ENCODE measurements at regions of chr2 and their contacts with region 1.

Region 1: DNA sequence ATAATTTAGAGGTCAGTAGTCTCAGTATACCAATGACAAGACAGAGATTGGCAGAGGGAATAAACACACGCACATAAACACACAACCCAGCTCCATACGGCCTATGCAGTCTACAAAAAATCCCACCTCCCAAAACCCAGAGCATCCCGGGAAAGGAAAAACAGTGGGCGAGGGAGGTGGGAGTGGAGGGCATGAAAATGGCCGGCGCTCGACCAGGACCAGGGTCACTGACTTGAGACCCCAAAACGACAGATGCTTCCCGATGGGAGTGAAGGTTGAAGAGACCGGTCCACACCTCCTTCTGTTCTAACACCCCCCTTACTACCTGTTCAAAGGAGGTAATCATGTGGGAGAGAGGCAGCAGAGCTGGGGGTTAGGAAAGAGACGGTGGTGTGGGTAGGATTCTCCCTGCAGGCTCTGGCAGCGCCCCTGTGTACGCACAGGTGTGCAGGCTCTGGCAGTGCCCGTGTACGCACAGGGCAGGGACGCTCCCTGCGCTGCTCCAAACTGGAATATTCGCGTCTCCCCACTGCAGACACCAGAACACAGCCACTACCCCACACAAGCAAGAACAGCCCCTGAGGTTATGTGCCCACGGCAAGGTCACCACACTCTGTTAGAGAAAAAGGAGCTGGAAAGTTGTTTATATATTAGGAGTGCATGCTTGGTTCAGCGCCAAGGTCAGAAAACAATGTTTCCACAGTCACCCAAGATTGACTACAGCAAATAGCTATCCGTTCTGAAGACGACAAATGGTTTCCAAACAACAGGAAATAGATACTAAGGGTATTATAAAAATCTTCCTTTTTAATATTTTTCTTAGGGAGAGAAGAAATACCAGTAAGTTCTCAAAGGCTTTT is 67.9 kb downstream of the EIPR1 start:
- DNase-seq: no peak
- ATAC-seq: no peak
- H3K4me3 ChIP-seq: no peak overlapping the region
- H3K4me3 Mint-ChIP-seq: no peak overlapping the region
- H3K27ac ChIP-seq: no peak overlapping the region
- H3K27ac Mint-ChIP-seq: no peak overlapping the region
- H3K4me1 ChIP-seq: peaks cover 19% of the 10 kb centered on the region
- H3K4me1 Mint-ChIP-seq: peaks cover 28% of the 10 kb centered on the region
- H3K27me3 ChIP-seq: no peaks in the 10 kb centered on the region
- H3K27me3 Mint-ChIP-seq: no peaks in the 10 kb centered on the region
- CTCF ChIP-seq: no peak

Region 2: GRCh38 chr2:3091696-3092095 is 218.0 kb before region 1 on chr2:
- CTCF ChIA-PET with region 1: no interaction called
- POLR2A ChIA-PET with region 1: no interaction called
- intact Hi-C with region 1: no loop called
- DNase-seq: no peak
- ATAC-seq: no peak
- H3K4me3 ChIP-seq: no peak overlapping the region
- H3K4me3 Mint-ChIP-seq: no peak overlapping the region
- H3K27ac ChIP-seq: no peak overlapping the region
- H3K27ac Mint-ChIP-seq: no peak overlapping the region
- H3K4me1 ChIP-seq: no peaks in the 10 kb centered on the region
- H3K4me1 Mint-ChIP-seq: peaks cover 11% of the 10 kb centered on the region
- H3K27me3 ChIP-seq: no peaks in the 10 kb centered on the region
- H3K27me3 Mint-ChIP-seq: peaks cover 25% of the 10 kb centered on the region
- CTCF ChIP-seq: no peak

Region 3: GRCh38 chr2:3198119-3198518 is 111.6 kb before region 1 on chr2:
- CTCF ChIA-PET with region 1: no interaction called
- POLR2A ChIA-PET with region 1: no interaction called
- intact Hi-C with region 1: loop called in 1 of 2 experiments (anchors 5 kb)
- DNase-seq: peak in 4 of 14 experiments; percentile 13 to 59 (median 37)
- ATAC-seq: no peak
- H3K4me3 ChIP-seq: peak overlapping the region; percentile 10
- H3K4me3 Mint-ChIP-seq: no peak overlapping the region
- H3K27ac ChIP-seq: no peak overlapping the region
- H3K27ac Mint-ChIP-seq: no peak overlapping the region
- H3K4me1 ChIP-seq: no peaks in the 10 kb centered on the region
- H3K4me1 Mint-ChIP-seq: peaks cover 4% of the 10 kb centered on the region
- H3K27me3 ChIP-seq: no peaks in the 10 kb centered on the region
- H3K27me3 Mint-ChIP-seq: no peaks in the 10 kb centered on the region
- CTCF ChIP-seq: no peak

Region 4: DNA sequence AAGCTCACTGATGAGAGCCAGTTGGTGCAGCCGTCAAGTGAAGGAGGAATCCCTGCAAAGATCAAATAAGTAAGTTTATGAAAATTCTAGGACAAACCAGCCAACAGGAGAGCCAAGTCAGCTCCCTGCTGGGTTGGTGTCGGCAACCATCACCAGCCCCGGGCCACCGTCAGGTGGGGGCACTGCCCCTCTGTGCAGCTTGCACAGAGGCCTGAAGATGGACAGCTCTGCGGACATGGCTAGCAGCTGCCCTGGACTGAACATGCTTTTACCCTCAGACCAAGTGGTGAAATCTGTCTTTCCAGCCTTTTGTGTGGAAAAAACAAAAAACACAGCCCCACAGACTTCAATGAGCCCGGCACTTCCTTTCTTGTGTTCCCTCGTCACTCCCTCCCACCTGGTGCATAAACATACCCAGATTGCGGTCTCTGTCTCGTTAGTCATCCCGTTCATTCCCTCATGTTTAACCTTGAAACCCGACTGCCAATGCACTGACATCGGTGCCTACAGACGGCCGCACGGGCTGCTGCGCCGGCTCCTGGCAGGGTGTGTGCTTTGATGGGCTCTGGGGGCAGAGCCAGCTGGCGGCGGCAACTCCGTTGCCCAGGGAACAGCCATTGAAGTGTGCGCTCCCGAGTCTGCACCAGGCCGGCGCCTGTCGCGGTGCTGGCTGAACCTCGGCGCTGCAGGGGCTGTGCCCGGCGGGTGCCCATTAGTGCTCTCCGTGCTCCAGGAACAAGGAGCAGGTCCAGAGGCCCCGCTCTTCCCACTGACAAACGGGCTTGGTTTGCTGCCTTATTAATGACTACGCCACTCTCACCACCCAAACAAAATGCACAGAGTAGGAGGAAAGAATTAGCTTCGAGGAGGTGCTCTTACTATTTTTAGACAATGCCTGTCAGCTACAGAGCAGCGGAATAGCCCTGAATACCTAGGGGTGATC is 27.4 kb before region 1 on chr2:
- CTCF ChIA-PET with region 1: no interaction called
- POLR2A ChIA-PET with region 1: no interaction called
- intact Hi-C with region 1: no loop called
- DNase-seq: no peak
- ATAC-seq: no peak
- H3K4me3 ChIP-seq: no peak overlapping the region
- H3K4me3 Mint-ChIP-seq: no peak overlapping the region
- H3K27ac ChIP-seq: no peak overlapping the region
- H3K27ac Mint-ChIP-seq: no peak overlapping the region
- H3K4me1 ChIP-seq: no peaks in the 10 kb centered on the region
- H3K4me1 Mint-ChIP-seq: no peaks in the 10 kb centered on the region
- H3K27me3 ChIP-seq: no peaks in the 10 kb centered on the region
- H3K27me3 Mint-ChIP-seq: no peaks in the 10 kb centered on the region
- CTCF ChIP-seq: no peak

Region 5: DNA sequence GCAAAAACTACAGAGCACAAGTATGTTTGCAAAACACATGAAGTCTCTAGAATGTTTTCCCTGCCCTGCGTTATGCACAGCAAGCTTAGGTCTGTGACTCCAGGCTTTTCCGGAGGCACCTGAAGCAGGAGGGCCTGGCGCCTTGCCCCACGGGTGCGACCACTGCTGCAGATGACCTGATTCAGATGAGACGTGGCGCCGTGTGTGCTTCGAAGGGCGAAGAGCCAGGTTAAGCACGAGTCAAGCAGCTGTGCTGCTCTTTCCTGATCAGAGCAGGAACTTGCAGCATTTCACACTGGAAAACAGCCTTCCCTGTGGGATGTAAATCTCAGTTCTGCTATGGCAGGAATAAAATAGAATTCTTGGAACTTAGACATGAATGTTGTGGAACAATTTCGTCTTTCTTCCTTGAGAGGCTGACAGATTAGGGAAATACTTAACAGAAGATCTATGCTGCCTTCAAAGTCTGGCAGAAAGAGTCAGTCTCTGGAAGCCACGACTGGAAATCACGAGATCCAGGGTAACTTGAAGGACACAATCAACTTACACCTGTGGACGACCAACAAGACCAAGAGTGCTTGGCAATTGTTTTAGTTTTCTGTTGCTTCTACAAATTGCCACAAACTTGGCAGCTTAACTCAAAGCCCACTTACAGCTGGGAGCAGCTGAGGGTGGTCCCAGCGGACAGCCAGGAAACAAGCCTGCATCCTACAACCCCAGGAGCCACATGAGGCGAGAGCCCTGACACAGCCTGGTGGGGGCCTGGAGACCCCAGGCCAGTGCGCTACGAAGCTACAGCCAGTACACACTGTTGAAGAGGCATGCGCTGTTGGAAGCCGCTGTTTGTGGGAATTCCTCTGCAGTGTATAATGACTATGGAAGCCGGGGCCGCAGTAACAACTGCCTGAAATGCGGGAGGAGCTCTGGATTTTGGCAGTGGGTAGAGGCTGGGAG is 24.9 kb after region 1 on chr2:
- CTCF ChIA-PET with region 1: no interaction called
- POLR2A ChIA-PET with region 1: no interaction called
- intact Hi-C with region 1: no loop called
- DNase-seq: no peak
- ATAC-seq: no peak
- H3K4me3 ChIP-seq: no peak overlapping the region
- H3K4me3 Mint-ChIP-seq: no peak overlapping the region
- H3K27ac ChIP-seq: no peak overlapping the region
- H3K27ac Mint-ChIP-seq: no peak overlapping the region
- H3K4me1 ChIP-seq: no peaks in the 10 kb centered on the region
- H3K4me1 Mint-ChIP-seq: no peaks in the 10 kb centered on the region
- H3K27me3 ChIP-seq: no peaks in the 10 kb centered on the region
- H3K27me3 Mint-ChIP-seq: no peaks in the 10 kb centered on the region
- CTCF ChIP-seq: no peak